ENCODE measurements at regions of chr9 and their contacts with region 1.

Region 1: GRCh38 chr9:96245399-96245798 is 56.6 kb downstream of the HSD17B3 start:
- DNase-seq: no peak
- H3K4me3 ChIP-seq: no peak overlapping the region
- H3K27ac ChIP-seq: no peak overlapping the region
- H3K4me1 ChIP-seq: no peaks in the 10 kb centered on the region
- H3K27me3 ChIP-seq: peaks cover 0 to 4% (median 0%) of the 10 kb centered on the region in 4 donors
- CTCF ChIP-seq: no peak
- EP300 ChIP-seq: no peak
- POLR2A ChIP-seq: no peak

Region 2: DNA sequence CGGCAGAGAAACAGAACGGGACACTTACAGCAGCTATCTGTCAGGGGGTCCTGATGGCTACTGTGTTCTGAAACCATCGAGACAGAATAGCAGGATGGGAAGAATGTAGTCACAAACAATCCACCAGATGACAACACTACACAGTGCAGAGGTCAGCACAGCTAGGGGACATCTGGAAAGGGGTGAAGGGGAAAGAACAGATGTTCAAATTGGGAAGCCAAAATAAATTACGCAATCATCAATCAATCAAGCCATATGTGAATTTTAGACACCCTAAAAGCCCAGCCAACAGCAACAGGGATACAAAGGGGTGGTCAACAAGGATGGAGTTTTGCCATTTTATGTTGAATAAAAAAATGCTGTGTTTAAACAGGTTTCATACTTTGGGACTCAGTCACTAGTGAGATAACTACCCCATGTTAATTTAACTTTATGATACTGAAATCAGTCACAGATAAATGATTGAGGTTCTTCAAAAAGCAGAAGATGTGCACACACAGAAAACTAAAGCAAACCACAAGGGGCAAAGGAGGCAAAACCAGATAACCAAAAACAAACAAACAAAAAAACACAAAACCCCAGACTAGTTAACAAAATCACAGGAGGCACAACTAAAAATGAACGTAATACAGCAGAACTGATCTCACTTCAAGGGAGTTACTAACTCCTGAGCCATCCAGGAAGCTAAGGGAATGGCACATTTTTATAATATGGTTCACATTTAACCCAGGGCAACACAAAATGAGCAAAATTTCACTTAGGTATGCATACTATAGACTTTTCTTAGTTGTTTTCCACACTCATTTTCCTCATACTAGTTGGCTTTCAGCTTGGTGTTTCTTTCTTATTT is 270.4 kb after region 1 on chr9:
- intact Hi-C with region 1: no loop called
- DNase-seq: no peak
- H3K4me3 ChIP-seq: no peak overlapping the region
- H3K27ac ChIP-seq: peak overlapping the region; percentile 25 to 68 (median 58)
- H3K4me1 ChIP-seq: peaks cover 6 to 20% (median 16%) of the 10 kb centered on the region in 4 donors
- H3K27me3 ChIP-seq: no peaks in the 10 kb centered on the region
- CTCF ChIP-seq: no peak
- EP300 ChIP-seq: no peak
- POLR2A ChIP-seq: no peak

Region 3: GRCh38 chr9:96674914-96675538 is 429.6 kb after region 1 on chr9:
- intact Hi-C with region 1: loop called (anchors 5 kb)
- DNase-seq: no peak
- H3K4me3 ChIP-seq: no peak overlapping the region
- H3K27ac ChIP-seq: no peak overlapping the region
- H3K4me1 ChIP-seq: peaks cover 0 to 11% (median 0%) of the 10 kb centered on the region in 4 donors
- H3K27me3 ChIP-seq: no peaks in the 10 kb centered on the region
- CTCF ChIP-seq: no peak
- EP300 ChIP-seq: no peak
- POLR2A ChIP-seq: no peak